ENCODE measurements at regions of chr17 and their contacts with region 1.

Region 1: DNA sequence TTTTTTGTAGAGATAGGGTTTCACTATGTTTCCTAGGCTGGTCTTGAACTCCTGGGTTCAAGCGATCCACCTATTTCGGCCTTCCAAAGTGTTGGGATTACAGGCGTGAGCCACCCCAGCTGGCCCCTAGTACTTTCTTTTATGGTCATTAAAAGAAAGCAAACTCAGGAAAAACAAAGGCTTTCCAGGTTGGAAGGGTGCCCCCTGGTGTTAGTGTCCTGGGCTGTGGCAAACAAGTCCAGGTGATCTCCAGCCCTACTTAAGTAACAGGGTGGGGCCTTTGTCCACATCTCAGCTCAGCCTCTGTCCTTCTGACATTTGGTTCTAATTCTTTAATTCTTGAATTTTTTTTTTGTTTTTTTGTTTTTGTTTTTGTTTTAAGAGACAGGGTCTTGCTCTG is 6.9 kb downstream of the IGFBP4 start:
- DNase-seq: peak; percentile 49
- ATAC-seq: peak; percentile 28
- H3K4me3 ChIP-seq: no peak overlapping the region
- H3K4me3 Mint-ChIP-seq: no peak overlapping the region
- H3K27ac ChIP-seq: no peak overlapping the region
- H3K27ac Mint-ChIP-seq: no peak overlapping the region
- H3K4me1 ChIP-seq: peaks cover 7 to 15% of the 10 kb centered on the region in 2 donors
- H3K4me1 Mint-ChIP-seq: peaks cover 22% of the 10 kb centered on the region
- H3K27me3 ChIP-seq: peaks cover 0 to 6% (median 0%) of the 10 kb centered on the region in 4 experiments
- H3K27me3 Mint-ChIP-seq: no peaks in the 10 kb centered on the region
- CTCF ChIP-seq: peak; percentile 58

Region 2: GRCh38 chr17:40437095-40437732 is 13.0 kb before region 1 on chr17:
- CTCF ChIA-PET with region 1: interaction called, 15 read pairs
- POLR2A ChIA-PET with region 1: no interaction called
- intact Hi-C with region 1: no loop called
- DNase-seq: no peak
- ATAC-seq: no peak
- H3K4me3 ChIP-seq: no peak overlapping the region
- H3K4me3 Mint-ChIP-seq: no peak overlapping the region
- H3K27ac ChIP-seq: no peak overlapping the region
- H3K27ac Mint-ChIP-seq: no peak overlapping the region
- H3K4me1 ChIP-seq: peaks cover 4 to 10% of the 10 kb centered on the region in 2 donors
- H3K4me1 Mint-ChIP-seq: peaks cover 6% of the 10 kb centered on the region
- H3K27me3 ChIP-seq: no peaks in the 10 kb centered on the region
- H3K27me3 Mint-ChIP-seq: no peaks in the 10 kb centered on the region
- CTCF ChIP-seq: no peak

Region 3: DNA sequence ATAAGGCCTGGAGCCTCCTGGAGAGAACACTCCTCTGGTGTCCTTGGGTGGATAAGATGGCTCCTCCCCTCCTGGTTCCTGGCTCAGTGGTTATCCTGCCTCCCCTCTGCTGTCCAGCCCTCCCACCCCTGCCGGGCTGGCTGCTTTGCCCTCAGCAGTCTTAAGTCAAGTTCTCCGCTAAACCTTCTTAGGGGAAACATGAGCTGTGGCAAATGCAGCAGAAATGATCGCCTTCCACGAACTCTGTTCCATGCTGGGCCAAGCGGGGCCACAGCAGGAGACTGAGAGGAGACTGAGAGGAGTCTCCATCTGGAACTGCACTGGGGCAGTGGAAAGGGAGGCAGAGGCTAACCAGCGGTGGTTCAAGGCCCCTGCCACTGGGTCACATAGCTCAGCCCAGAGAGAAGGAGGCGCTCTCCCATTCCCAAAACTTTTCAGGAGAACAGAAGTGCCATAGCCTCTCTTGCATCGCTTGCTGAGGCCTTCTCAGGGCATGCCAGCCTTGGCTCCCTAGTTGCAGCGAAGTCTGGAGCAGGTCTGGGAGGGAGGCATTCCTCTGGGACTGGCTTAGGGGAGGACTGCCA is 24.3 kb after region 1 on chr17:
- CTCF ChIA-PET with region 1: interaction called, 12 read pairs
- POLR2A ChIA-PET with region 1: no interaction called
- intact Hi-C with region 1: no loop called
- DNase-seq: no peak
- ATAC-seq: no peak
- H3K4me3 ChIP-seq: no peak overlapping the region
- H3K4me3 Mint-ChIP-seq: no peak overlapping the region
- H3K27ac ChIP-seq: no peak overlapping the region
- H3K27ac Mint-ChIP-seq: no peak overlapping the region
- H3K4me1 ChIP-seq: peaks cover 12 to 23% of the 10 kb centered on the region in 2 donors
- H3K4me1 Mint-ChIP-seq: peaks cover 10% of the 10 kb centered on the region
- H3K27me3 ChIP-seq: peaks cover 0 to 4% (median 1%) of the 10 kb centered on the region in 4 experiments
- H3K27me3 Mint-ChIP-seq: no peaks in the 10 kb centered on the region
- CTCF ChIP-seq: no peak

Region 4: DNA sequence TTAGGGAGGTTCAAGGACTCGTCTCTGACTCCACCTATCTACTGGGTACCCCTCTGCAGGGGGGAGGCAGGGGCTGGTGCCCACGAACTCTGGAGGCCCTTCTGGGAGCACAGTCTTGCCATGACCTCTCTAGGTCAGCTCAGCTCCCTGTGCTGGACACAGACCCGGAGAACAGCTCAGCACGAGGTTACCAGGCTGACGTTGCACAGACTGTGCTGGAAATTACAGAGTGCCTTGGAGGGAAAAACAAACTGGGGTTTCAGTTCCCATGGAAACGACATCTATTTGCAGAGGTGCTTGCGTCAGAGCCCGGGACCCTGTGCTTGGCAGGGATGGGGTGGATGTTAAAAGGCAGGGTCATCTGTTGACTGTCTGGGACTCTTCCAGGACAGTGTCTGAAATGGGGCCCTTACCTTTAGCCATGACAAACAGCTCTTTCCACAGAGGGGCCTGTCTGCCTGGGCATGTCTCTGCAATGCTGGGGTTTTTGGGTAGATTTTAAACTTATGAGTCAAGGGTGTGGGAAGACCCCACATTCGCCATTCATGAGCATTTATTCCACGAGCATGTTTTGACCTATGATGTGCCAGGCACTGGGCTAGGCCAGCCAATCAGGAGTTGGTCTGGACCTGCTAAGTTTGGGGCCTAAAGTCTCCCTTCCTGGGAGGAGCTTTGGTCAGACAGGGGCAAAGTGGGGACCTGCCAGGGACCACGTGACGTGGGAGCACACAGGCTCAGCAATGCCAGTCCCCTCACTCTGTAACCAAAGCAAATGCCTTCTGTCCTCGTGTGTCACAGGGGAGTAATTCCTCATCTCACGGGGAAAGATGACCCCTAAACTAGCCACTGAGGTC is 92.6 kb after region 1 on chr17:
- CTCF ChIA-PET with region 1: no interaction called
- POLR2A ChIA-PET with region 1: interaction called, 12 read pairs
- intact Hi-C with region 1: no loop called
- DNase-seq: peak; percentile 71
- ATAC-seq: peak; percentile 11
- H3K4me3 ChIP-seq: no peak overlapping the region
- H3K4me3 Mint-ChIP-seq: peak overlapping the region; percentile 63
- H3K27ac ChIP-seq: peak overlapping the region in 1 of 2 donors; percentile 30
- H3K27ac Mint-ChIP-seq: peak overlapping the region; percentile 89
- H3K4me1 ChIP-seq: peaks cover 48 to 61% of the 10 kb centered on the region in 2 donors
- H3K4me1 Mint-ChIP-seq: peaks cover 64% of the 10 kb centered on the region
- H3K27me3 ChIP-seq: no peaks in the 10 kb centered on the region
- H3K27me3 Mint-ChIP-seq: no peaks in the 10 kb centered on the region
- CTCF ChIP-seq: no peak

Measured in B cell (primary cell).